CD4-positive, alpha-beta T cell (primary cell): ENCODE measurements at regions of chr14 and their contacts with region 1.

Region 1: DNA sequence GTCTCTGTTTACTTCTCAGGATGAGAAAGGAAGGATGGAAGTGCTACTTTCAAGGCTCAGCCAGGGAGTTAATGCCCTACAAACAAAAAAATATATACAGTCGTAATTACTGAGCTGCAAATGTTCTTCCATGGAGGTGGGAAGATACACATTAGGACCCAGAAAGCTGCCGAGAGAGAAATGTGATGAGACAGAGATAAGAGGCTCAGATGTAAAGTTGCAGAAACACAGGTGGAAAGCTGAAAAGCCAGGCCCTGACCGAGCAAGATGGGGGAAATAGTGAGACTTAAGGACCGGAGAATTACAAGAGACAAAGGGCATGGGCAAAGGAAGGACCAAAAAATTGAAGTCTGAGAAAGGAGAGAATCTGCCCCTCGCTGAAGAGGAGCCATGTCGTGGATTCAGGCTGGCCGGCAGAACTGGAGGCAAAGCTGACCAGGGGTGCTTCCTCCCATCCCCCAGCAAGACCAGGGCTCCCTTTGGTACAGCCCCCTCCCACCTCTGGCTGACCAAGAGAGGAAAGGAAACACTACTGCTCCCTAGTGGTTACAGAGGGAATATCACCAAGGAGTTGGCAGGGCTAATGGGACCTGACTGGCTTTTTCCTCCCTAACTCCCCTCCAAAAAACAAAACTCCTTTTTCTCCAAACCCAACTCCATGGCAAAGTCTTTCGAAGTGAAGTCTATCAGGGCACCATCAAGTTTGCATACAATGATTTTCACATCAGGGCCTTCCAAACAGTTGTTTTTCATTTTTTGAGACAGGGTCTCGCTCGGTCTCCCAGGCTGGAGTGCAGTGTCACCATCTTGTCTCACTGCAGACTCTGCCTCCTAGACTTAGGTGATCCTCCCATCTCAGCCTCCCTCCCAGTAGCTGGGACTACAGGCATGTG is 12.1 kb downstream of the ZFHX2 start:
- DNase-seq: peak in 5 of 14 experiments; percentile 10 to 69 (median 55)
- ATAC-seq: peak; percentile 78
- H3K4me3 ChIP-seq: no peak overlapping the region
- H3K4me3 Mint-ChIP-seq: no peak overlapping the region
- H3K27ac ChIP-seq: no peak overlapping the region
- H3K27ac Mint-ChIP-seq: no peak overlapping the region
- H3K4me1 ChIP-seq: peaks cover 4% of the 10 kb centered on the region
- H3K4me1 Mint-ChIP-seq: no peaks in the 10 kb centered on the region
- H3K27me3 ChIP-seq: no peaks in the 10 kb centered on the region
- H3K27me3 Mint-ChIP-seq: peaks cover 5% of the 10 kb centered on the region
- CTCF ChIP-seq: peak; percentile 78

Region 2: DNA sequence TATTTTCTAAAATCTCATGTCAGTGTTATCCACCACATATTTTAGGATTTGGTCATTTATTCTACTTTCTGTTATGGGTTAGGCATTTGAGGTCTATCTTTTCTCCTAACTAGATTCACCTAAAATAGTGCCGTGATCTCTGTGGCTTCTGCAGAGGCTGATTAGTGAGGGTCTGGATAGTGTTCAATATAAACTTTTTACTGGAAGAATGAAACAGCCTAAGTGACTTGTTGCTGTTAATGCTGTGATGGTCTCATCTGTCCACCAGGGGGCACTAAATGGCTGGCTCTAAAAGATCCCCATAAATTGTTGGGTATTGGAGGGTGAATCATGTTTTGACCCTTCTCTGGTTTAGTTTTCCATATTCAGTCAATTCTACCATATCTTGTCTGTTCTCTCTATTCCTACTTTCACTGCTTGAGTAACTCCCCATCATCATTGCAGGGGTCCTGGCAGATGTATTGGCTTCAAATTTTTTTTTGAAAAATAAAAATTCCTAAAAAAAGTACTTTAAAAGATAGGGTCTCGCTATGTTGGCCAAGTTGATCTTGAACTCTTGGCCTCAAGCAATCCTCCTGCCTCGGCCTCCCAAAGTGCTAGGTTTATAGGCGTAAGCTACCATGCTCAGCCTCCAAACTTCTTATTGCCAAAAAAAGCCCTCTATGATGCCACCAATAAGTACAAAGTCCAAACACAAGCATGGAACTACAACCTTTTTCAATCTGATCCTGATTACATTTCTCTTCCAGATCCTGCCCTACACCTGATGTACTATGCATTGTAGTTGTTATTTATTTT is 211.3 kb before region 1 on chr14:
- CTCF ChIA-PET with region 1: no interaction called
- POLR2A ChIA-PET with region 1: no interaction called
- intact Hi-C with region 1: loop called in 1 of 2 experiments (anchors 5 kb)
- DNase-seq: peak; percentile 32 to 84 (median 54)
- ATAC-seq: peak; percentile 78
- H3K4me3 ChIP-seq: no peak overlapping the region
- H3K4me3 Mint-ChIP-seq: peak overlapping the region; percentile 36
- H3K27ac ChIP-seq: no peak overlapping the region
- H3K27ac Mint-ChIP-seq: no peak overlapping the region
- H3K4me1 ChIP-seq: peaks cover 9% of the 10 kb centered on the region
- H3K4me1 Mint-ChIP-seq: peaks cover 8% of the 10 kb centered on the region
- H3K27me3 ChIP-seq: no peaks in the 10 kb centered on the region
- H3K27me3 Mint-ChIP-seq: no peaks in the 10 kb centered on the region
- CTCF ChIP-seq: peak; percentile 96

Region 3: GRCh38 chr14:23478111-23478759 is 61.3 kb before region 1 on chr14:
- CTCF ChIA-PET with region 1: interaction called, 4 read pairs
- POLR2A ChIA-PET with region 1: interaction called, 3 read pairs
- intact Hi-C with region 1: loop called (anchors 1 kb)
- DNase-seq: peak; percentile 40 to 82 (median 61)
- ATAC-seq: peak; percentile 90
- H3K4me3 ChIP-seq: no peak overlapping the region
- H3K4me3 Mint-ChIP-seq: no peak overlapping the region
- H3K27ac ChIP-seq: no peak overlapping the region
- H3K27ac Mint-ChIP-seq: peak overlapping the region; percentile 1
- H3K4me1 ChIP-seq: no peaks in the 10 kb centered on the region
- H3K4me1 Mint-ChIP-seq: peaks cover 16% of the 10 kb centered on the region
- H3K27me3 ChIP-seq: no peaks in the 10 kb centered on the region
- H3K27me3 Mint-ChIP-seq: no peaks in the 10 kb centered on the region
- CTCF ChIP-seq: peak; percentile 70